ENCODE measurements at regions of chr19 and their contacts with region 1.

Region 1: DNA sequence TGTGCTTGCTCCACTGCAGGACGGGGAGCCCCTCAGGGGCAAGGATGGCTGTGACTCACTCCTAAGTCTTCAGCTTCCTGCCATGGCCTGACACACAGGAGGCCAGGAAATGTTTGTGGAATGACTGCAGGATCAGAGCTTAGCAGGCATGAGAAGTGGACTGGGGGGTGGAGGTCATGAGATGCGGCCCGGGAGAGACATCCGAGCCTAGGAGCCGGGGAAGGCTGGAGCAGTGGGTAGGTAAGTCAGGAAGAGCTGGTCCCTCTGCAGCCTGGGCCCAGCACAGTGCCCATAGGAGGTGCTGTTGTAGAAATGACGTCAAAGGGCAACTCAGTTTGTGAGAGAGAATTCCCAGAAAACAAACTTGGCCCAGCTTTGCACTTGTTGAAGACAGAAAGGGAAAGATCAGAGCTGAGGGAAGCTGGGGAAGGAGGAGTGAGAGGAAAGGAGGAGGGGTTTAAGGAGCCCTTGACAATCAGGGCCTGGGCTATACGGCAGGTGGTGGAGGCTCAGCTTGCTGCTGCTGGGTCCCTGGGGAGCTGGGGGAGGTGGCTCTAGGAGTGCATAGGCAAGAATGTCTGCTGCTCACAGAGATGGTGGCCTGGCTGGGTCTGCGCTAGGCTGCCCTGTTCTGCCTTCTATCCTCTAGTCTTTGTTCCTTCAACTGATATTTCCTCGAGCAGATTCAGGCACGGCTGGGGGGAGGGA is 18.5 kb downstream of the POU2F2 start:
- DNase-seq: peak; percentile 40
- ATAC-seq: peak; percentile 90
- H3K4me3 ChIP-seq: 0 out of 2 replicates have a peak overlapping the region, but pooled peaks have one; percentile 2
- H3K27ac ChIP-seq: peak overlapping the region; percentile 88
- H3K4me1 ChIP-seq: peaks cover 53% of the 10 kb centered on the region
- H3K27me3 ChIP-seq: no peaks in the 10 kb centered on the region
- CTCF ChIP-seq: peak in 2 of 3 experiments; percentile 8 to 18; a peak in 1 of 6 replicates
- EP300 ChIP-seq: no peak
- POLR2A ChIP-seq: 0 out of 2 replicates have a peak, but pooled peaks have one; percentile 21
- RAD21 ChIP-seq: no peak

Region 2: GRCh38 chr19:42102877-42103276 is 10.9 kb before region 1 on chr19:
- CTCF ChIA-PET with region 1: interaction called, 9 read pairs
- POLR2A ChIA-PET with region 1: no interaction called
- RAD21 ChIA-PET with region 1: interaction called, 3 read pairs
- SMC1A ChIA-PET with region 1: interaction called, 14 read pairs
- in situ Hi-C with region 1: no loop called
- intact Hi-C with region 1: no loop called
- DNase-seq: no peak
- ATAC-seq: no peak
- H3K4me3 ChIP-seq: no peak overlapping the region
- H3K27ac ChIP-seq: no peak overlapping the region
- H3K4me1 ChIP-seq: peaks cover 7% of the 10 kb centered on the region
- H3K27me3 ChIP-seq: no peaks in the 10 kb centered on the region
- CTCF ChIP-seq: no peak
- EP300 ChIP-seq: no peak
- POLR2A ChIP-seq: no peak
- RAD21 ChIP-seq: no peak

Region 3: DNA sequence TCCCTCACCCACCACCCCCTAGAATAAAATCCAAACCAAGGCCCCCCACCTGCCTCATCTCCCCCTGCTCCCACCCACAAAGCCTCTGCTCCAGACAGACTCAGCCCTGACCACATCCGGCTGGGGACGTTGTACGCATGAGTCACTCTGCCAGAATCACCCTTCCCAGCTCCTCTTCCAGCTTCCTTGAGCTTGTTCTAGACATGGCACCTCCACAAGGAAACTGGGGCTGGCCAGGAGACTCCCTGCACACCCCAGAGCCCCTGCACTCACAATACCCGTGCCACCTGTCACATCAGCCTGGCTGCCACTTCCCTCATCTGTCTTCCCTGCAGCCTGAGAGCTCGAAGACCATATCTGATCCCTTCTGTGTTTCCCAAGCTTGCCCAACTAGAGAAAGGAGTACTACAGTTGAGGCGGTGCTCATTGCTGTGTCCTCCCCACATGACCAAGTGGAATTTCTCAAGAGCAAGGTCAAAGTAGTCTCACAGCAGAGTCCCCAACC is 94.0 kb after region 1 on chr19:
- CTCF ChIA-PET with region 1: no interaction called
- POLR2A ChIA-PET with region 1: no interaction called
- RAD21 ChIA-PET with region 1: no interaction called
- SMC1A ChIA-PET with region 1: no interaction called
- in situ Hi-C with region 1: no loop called
- intact Hi-C with region 1: no loop called
- DNase-seq: no peak
- ATAC-seq: no peak
- H3K4me3 ChIP-seq: no peak overlapping the region
- H3K27ac ChIP-seq: no peak overlapping the region
- H3K4me1 ChIP-seq: peaks cover 4% of the 10 kb centered on the region
- H3K27me3 ChIP-seq: no peaks in the 10 kb centered on the region
- CTCF ChIP-seq: no peak
- EP300 ChIP-seq: no peak
- POLR2A ChIP-seq: no peak
- RAD21 ChIP-seq: no peak

Region 4: GRCh38 chr19:42352301-42353259 is 238.8 kb after region 1 on chr19:
- CTCF ChIA-PET with region 1: no interaction called
- POLR2A ChIA-PET with region 1: no interaction called
- RAD21 ChIA-PET with region 1: no interaction called
- SMC1A ChIA-PET with region 1: no interaction called
- in situ Hi-C with region 1: no loop called
- intact Hi-C with region 1: no loop called
- DNase-seq: no peak
- ATAC-seq: peak; percentile 70
- H3K4me3 ChIP-seq: no peak overlapping the region
- H3K27ac ChIP-seq: no peak overlapping the region
- H3K4me1 ChIP-seq: no peaks in the 10 kb centered on the region
- H3K27me3 ChIP-seq: no peaks in the 10 kb centered on the region
- CTCF ChIP-seq: no peak
- EP300 ChIP-seq: no peak
- POLR2A ChIP-seq: no peak
- RAD21 ChIP-seq: no peak